ENCODE measurements at regions of chr20 and their contacts with region 1.

Region 1: GRCh38 chr20:1894951-1895673 is at the start of gene SIRPA:
- DNase-seq: peak; percentile 57 to 82 (median 73)
- H3K4me3 ChIP-seq: peak within 1 kb of the TSS; percentile 59 to 98 (median 84)
- H3K27ac ChIP-seq: peak within 1 kb of the TSS; percentile 88 to 100 (median 99)
- H3K27me3 ChIP-seq: no peaks in the 10 kb centered on the region
- CTCF ChIP-seq: peak in 1 of 56 donors; percentile 17
- total RNA-seq, gene SIRPA: 164 to 389 (median 265) TPM

Region 2: GRCh38 chr20:1434571-1435336 is 460.4 kb before region 1 on chr20:
- intact Hi-C with region 1: no loop called
- DNase-seq: peak in 1 of 10 donors; percentile 16
- H3K4me3 ChIP-seq: no peak overlapping the region
- H3K27ac ChIP-seq: no peak overlapping the region
- H3K27me3 ChIP-seq: no peaks in the 10 kb centered on the region
- CTCF ChIP-seq: no peak

Region 3: GRCh38 chr20:1535420-1536175 is 359.5 kb before region 1 on chr20:
- intact Hi-C with region 1: no loop called
- DNase-seq: peak in 1 of 10 donors; percentile 14
- H3K4me3 ChIP-seq: no peak overlapping the region
- H3K27ac ChIP-seq: peak overlapping the region in 1 of 59 donors; percentile 61
- H3K27me3 ChIP-seq: no peaks in the 10 kb centered on the region
- CTCF ChIP-seq: no peak

Region 4: GRCh38 chr20:1790386-1790785 is 104.7 kb before region 1 on chr20:
- intact Hi-C with region 1: no loop called
- DNase-seq: no peak
- H3K4me3 ChIP-seq: no peak overlapping the region
- H3K27ac ChIP-seq: no peak overlapping the region
- H3K27me3 ChIP-seq: no peaks in the 10 kb centered on the region
- CTCF ChIP-seq: no peak

Region 5: GRCh38 chr20:1830240-1830639 is 64.9 kb before region 1 on chr20:
- intact Hi-C with region 1: loop called in 1 of 2 experiments (anchors 2 kb)
- DNase-seq: peak; percentile 35 to 94 (median 81)
- H3K4me3 ChIP-seq: peak overlapping the region in 1 of 59 donors; percentile 8
- H3K27ac ChIP-seq: peak overlapping the region; percentile 60 to 100 (median 97)
- H3K27me3 ChIP-seq: no peaks in the 10 kb centered on the region
- CTCF ChIP-seq: no peak

Region 6: DNA sequence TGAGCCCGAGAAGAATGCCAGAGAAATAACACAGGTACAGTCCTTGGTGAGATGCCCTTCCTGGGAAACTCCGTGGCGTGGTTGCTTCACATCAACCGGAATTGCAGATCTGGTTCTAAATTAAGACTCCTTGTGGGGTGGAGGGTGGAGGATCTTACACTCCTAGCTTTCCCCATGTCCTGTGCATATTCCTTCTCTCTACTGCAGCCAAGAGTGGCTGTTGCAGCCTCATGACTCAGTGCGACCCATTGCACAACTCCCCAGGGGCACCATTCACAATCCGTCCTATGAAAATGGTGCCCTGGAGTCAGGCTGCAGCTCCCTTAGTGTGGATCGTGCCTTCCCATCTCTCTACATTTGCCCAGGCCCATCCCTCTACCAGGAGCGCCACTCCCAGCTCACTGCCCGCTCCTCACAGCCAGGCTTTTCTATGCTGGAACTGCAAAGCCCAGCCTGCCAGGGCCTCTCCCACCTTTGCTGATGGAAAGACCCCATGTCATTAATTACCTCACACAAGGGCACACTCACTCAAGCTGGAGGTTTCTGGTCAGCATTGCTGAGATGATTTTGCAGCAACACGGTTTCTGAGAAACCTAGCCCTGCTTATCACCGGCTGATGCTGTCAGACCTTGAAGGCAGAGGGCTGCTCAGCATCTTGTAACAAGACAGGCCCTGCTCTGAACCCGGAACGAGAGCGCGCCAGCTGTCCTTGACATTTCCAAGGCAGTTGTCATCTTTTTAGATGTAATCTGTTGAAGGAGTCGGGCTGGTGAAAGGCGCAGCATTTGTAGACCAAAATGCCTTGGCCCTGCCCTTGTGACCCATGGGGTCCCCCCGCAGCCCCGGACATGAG is 39.8 kb after region 1 on chr20:
- intact Hi-C with region 1: loop called in 1 of 2 experiments (anchors 5 kb)
- DNase-seq: peak in 2 of 10 donors; percentile 35 to 44
- H3K4me3 ChIP-seq: peak overlapping the region in 14 of 59 donors; percentile 3 to 37 (median 17)
- H3K27ac ChIP-seq: peak overlapping the region; percentile 27 to 95 (median 86)
- H3K27me3 ChIP-seq: no peaks in the 10 kb centered on the region
- CTCF ChIP-seq: no peak

Region 7: DNA sequence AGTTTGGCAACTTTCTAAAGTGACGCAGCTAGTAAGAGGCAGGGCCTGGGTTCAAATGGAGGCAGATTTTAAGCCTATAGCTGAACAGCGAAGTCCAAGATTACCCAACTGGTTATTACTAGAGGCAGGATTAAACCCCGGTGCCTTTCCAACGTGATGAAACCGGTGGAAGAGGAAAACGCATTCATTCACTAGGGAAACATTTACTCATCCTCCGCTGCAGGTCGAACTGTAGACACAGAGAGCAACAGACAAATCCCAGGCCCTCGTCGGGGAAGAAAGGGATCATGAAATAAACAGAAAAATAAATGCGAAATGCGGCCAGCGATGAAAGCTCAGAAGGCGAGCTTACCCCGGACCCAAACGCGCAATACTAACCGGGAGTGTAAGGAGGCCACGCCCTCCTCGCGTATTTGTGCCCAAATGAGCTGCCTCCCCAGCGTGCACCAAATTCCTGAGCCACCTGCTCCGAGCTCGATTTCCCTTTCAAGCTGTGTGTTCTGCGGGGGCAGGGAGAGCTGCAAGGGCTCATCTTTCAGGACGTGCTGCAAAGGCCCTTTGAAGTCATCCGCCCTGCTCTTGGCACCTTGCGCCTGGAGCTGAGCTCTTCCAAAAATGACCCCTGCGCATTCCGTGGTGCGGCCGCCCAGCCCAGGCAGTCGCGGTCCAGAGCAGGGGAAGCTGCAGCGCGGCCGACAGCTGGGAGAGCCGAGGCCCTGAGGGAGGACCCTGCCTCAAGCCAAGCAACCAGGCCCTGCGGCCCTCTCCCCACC is 51.8 kb after region 1 on chr20:
- intact Hi-C with region 1: no loop called
- DNase-seq: peak in 1 of 10 donors; percentile 90
- H3K4me3 ChIP-seq: peak overlapping the region in 38 of 59 donors; percentile 0 to 48 (median 26)
- H3K27ac ChIP-seq: peak overlapping the region in 55 of 59 donors; percentile 7 to 90 (median 60)
- H3K27me3 ChIP-seq: no peaks in the 10 kb centered on the region
- CTCF ChIP-seq: no peak

Region 8: GRCh38 chr20:1965520-1966351 is 70.6 kb after region 1 on chr20:
- intact Hi-C with region 1: loop called in 1 of 2 experiments (anchors 5 kb)
- DNase-seq: peak; percentile 67 to 85 (median 82)
- H3K4me3 ChIP-seq: peak overlapping the region in 55 of 59 donors; percentile 2 to 58 (median 35)
- H3K27ac ChIP-seq: peak overlapping the region in 17 of 59 donors; percentile 1 to 64 (median 17)
- H3K27me3 ChIP-seq: no peaks in the 10 kb centered on the region
- CTCF ChIP-seq: peak; percentile 86 to 99 (median 96)

Measured in dorsolateral prefrontal cortex (tissue), 120 donors.